HCT116 (cell line): ENCODE measurements at regions of chr9 and their contacts with region 1.

Region 1: GRCh38 chr9:127734747-127735529 is at the start of gene TOR2A:
- DNase-seq: peak; percentile 92
- ATAC-seq: peak; percentile 93
- H3K4me3 ChIP-seq: peak within 1 kb of the TSS; percentile 58 to 72
- H3K27ac ChIP-seq: peak within 1 kb of the TSS; percentile 87
- H3K4me1 ChIP-seq: peaks cover 4 to 18% of the 10 kb centered on the region in 2 experiments
- H3K27me3 ChIP-seq: no peaks in the 10 kb centered on the region
- CTCF ChIP-seq: peak in 2 of 3 experiments; percentile 91 to 92; a peak in 4 of 6 replicates
- POLR2A ChIP-seq: no peak
- RAD21 ChIP-seq: no peak
- total RNA-seq, gene TOR2A: 12.0 TPM

Region 2: GRCh38 chr9:126482361-126483044 is 1252.4 kb before region 1 on chr9:
- CTCF ChIA-PET with region 1: no interaction called
- POLR2A ChIA-PET with region 1: no interaction called
- RAD21 ChIA-PET with region 1: no interaction called
- intact Hi-C with region 1: no loop called
- DNase-seq: no peak
- ATAC-seq: no peak
- H3K4me3 ChIP-seq: no peak overlapping the region
- H3K27ac ChIP-seq: no peak overlapping the region
- H3K4me1 ChIP-seq: no peaks in the 10 kb centered on the region
- H3K27me3 ChIP-seq: no peaks in the 10 kb centered on the region
- CTCF ChIP-seq: no peak
- POLR2A ChIP-seq: no peak
- RAD21 ChIP-seq: no peak

Region 3: DNA sequence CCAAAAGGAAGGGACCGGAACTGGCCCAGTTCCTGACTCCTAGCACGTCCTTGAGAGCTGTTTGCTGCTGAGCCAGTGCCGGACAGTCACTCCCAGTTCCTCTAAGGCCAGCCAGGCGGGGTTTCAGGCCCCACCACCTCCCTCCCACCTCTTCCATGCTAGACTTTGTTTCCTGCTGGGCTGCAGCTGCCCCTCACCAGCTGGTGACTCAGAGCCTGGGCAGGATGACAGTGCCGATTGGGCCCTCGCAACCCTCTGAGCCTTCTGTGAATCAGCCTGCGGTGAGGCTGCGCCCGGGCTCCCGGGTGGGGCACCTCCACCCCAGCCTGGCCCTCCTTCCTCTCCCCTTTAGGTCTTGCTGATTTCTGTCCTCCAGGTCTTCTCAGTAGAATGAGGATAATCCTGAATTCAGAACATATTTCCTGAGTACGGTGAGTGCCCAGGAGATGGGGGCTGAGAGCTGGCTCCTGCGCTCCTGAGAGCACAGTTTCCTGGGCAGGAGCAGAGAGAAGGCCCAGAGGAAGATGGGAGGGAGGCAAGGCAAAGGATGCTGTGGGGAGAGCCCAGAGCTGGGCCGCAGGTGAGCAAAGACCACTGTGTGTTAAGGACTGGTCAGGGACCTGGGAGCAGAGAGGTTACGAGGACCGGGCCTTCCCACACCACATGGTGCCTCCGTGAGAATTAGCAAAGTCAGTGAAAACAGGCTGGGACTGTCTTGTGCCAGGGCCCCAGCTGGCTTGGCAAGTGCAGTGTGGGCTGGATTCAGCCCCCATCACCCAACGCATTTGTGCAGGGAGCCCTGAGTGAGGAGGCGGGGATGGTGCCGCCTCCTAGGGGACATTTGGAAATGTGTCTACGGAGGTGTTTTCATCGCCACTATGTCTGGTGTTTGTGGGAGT is 155.7 kb before region 1 on chr9:
- CTCF ChIA-PET with region 1: interaction called, 13 read pairs
- POLR2A ChIA-PET with region 1: interaction called, 4 read pairs
- RAD21 ChIA-PET with region 1: no interaction called
- intact Hi-C with region 1: no loop called
- DNase-seq: peak; percentile 91
- ATAC-seq: peak; percentile 89
- H3K4me3 ChIP-seq: peak overlapping the region; percentile 34 to 54
- H3K27ac ChIP-seq: peak overlapping the region; percentile 82
- H3K4me1 ChIP-seq: peaks cover 45 to 69% of the 10 kb centered on the region in 2 experiments
- H3K27me3 ChIP-seq: no peaks in the 10 kb centered on the region
- CTCF ChIP-seq: peak in 2 of 3 experiments; percentile 36 to 50; a peak in 4 of 6 replicates
- POLR2A ChIP-seq: peak; percentile 58
- RAD21 ChIP-seq: no peak

Region 4: GRCh38 chr9:127634698-127635097 is 100.2 kb before region 1 on chr9:
- CTCF ChIA-PET with region 1: interaction called, 10 read pairs
- POLR2A ChIA-PET with region 1: no interaction called
- RAD21 ChIA-PET with region 1: no interaction called
- intact Hi-C with region 1: no loop called
- DNase-seq: peak; percentile 16
- ATAC-seq: peak; percentile 77
- H3K4me3 ChIP-seq: no peak overlapping the region
- H3K27ac ChIP-seq: no peak overlapping the region
- H3K4me1 ChIP-seq: peaks cover 11 to 15% of the 10 kb centered on the region in 2 experiments; a peak in 3 of 4 replicates
- H3K27me3 ChIP-seq: no peaks in the 10 kb centered on the region
- CTCF ChIP-seq: peak; percentile 30 to 53 (median 43); a peak in 4 of 6 replicates
- POLR2A ChIP-seq: no peak
- RAD21 ChIP-seq: peak; percentile 63

Region 5: DNA sequence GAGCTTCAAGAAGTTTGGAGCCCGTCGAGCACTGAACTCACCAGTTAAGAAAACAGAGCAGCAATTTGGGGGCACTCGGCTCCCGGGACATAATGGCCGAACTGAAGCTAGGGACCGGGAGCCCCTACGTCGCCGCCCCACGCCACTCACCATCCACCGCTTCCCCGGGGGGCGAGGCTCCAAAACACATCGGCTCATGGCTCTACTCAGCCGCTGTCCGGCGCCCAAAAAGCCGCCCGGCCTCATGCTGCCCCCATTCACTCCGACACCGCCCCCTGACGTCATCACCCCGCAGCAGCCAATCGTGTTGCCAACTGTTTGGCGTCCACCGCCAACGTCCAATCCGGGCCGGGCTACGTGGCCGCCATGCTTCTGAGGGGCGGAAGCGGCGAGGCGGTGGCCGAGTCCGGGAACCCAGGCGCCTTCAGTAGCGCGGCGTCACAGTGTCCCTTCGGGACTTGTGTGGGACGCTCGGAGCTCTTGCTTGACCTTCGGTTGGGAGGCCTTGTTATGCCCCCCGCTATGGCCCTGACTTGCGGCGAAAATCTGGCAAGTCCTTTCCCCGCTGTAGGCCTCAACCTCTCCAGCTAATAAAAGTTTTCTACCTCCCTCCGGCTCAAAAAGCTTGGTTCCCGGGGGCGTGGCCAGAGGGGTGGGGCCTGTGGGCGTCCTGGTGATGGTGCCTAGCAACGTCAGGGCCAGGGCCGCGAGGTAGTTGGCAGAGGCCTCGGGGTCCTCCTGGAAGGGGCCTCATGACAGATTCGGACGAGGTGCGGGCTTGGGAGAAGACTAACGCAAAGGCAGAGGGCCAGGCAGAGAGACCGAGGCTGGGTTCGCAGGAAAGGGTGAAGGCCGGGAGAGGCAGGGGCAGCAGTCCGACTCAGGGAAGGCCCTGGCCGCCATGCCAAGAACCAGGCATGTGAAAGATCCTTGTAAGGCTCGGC is 19.3 kb before region 1 on chr9 and contains the starts of genes PTRH1 and TTC16:
- CTCF ChIA-PET with region 1: interaction called, 12 read pairs
- POLR2A ChIA-PET with region 1: interaction called, 3 read pairs
- RAD21 ChIA-PET with region 1: interaction called in 1 of 2 experiments, 4 read pairs
- intact Hi-C with region 1: no loop called
- DNase-seq: peak; percentile 93
- ATAC-seq: peak; percentile 94
- H3K4me3 ChIP-seq: peak within 1 kb of the TSS; percentile 90 to 92
- H3K27ac ChIP-seq: peak within 1 kb of the TSS; percentile 82
- H3K4me1 ChIP-seq: peaks cover 14 to 24% of the 10 kb centered on the region in 2 experiments
- H3K27me3 ChIP-seq: no peaks in the 10 kb centered on the region
- CTCF ChIP-seq: no peak
- POLR2A ChIP-seq: peak; percentile 42
- RAD21 ChIP-seq: no peak
- total RNA-seq, gene PTRH1: 21.8 TPM
- total RNA-seq, gene TTC16: not detected

Region 6: GRCh38 chr9:127770905-127771569 is 36.1 kb after region 1 on chr9:
- CTCF ChIA-PET with region 1: interaction called, 24 read pairs
- POLR2A ChIA-PET with region 1: interaction called, 10 read pairs
- RAD21 ChIA-PET with region 1: interaction called in 1 of 2 experiments, 4 read pairs
- intact Hi-C with region 1: loop called (anchors 1 kb)
- DNase-seq: peak; percentile 95
- ATAC-seq: peak; percentile 97
- H3K4me3 ChIP-seq: peak overlapping the region; percentile 50 to 60
- H3K27ac ChIP-seq: peak overlapping the region; percentile 34; the same call in 1 of the 2 replicates
- H3K4me1 ChIP-seq: peaks cover 13 to 21% of the 10 kb centered on the region in 2 experiments
- H3K27me3 ChIP-seq: no peaks in the 10 kb centered on the region
- CTCF ChIP-seq: no peak
- POLR2A ChIP-seq: no peak
- RAD21 ChIP-seq: no peak

Region 7: DNA sequence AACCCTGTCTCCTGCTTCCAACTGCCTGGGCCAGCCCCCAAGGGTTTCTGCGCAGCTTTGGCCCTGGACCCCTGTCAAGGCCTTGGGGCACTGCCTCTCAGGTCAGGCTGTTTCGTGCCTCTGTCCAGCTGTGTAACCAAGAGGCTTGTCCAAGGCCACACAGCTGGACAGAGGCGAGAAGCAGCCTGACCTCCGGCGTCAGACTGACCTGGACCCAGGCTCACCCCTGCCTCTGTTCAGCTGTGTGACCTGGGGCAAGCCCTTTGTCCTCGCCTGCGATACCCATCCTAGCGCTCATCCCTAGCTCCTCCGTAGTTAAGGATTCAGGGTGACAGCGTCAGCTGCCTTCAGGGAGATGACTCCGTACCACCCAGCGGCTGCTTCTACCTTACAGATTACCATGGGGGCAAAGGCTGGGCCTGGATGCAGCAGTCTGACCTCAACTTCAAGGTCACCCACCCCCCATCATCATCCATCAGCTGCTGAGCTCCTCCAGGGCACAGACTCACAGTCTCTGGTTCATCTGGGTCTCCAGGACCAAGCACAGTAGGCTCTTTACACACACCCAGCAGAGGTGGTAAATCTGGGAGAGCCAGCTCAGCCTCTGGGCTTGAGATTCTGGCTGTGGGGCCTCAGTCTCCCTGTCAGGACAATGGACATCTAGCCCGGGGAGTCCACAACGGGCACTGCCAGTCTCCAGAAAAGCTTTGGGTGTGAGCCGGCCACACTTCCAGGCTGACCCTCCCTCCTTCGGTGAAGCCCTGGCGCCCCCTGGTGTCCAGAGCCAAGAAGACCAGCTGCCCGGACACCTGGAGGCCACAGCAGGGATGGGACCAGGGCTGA is 134.6 kb after region 1 on chr9:
- CTCF ChIA-PET with region 1: interaction called, 29 read pairs
- POLR2A ChIA-PET with region 1: no interaction called
- RAD21 ChIA-PET with region 1: interaction called, 5 read pairs
- intact Hi-C with region 1: loop called (anchors 1 kb)
- DNase-seq: peak; percentile 65
- ATAC-seq: peak; percentile 99
- H3K4me3 ChIP-seq: no peak overlapping the region
- H3K27ac ChIP-seq: no peak overlapping the region
- H3K4me1 ChIP-seq: peaks cover 5 to 15% of the 10 kb centered on the region in 2 experiments; a peak in 3 of 4 replicates
- H3K27me3 ChIP-seq: no peaks in the 10 kb centered on the region
- CTCF ChIP-seq: peak in 2 of 3 experiments; percentile 87 to 96; a peak in 4 of 6 replicates
- POLR2A ChIP-seq: no peak
- RAD21 ChIP-seq: no peak

Region 8: GRCh38 chr9:127923771-127924170 is 188.8 kb after region 1 on chr9:
- CTCF ChIA-PET with region 1: interaction called, 19 read pairs
- POLR2A ChIA-PET with region 1: interaction called, 4 read pairs
- RAD21 ChIA-PET with region 1: interaction called, 4 to 7 read pairs
- intact Hi-C with region 1: loop called (anchors 1 kb)
- DNase-seq: peak; percentile 68
- ATAC-seq: no peak
- H3K4me3 ChIP-seq: 0 out of 4 replicates have a peak overlapping the region, but pooled peaks of 1 of the 2 experiments have one; percentile 15
- H3K27ac ChIP-seq: peak overlapping the region; percentile 55
- H3K4me1 ChIP-seq: peaks cover 43 to 82% of the 10 kb centered on the region in 2 experiments
- H3K27me3 ChIP-seq: no peaks in the 10 kb centered on the region
- CTCF ChIP-seq: no peak
- POLR2A ChIP-seq: no peak
- RAD21 ChIP-seq: no peak